ENCODE measurements at regions of chr14 and their contacts with region 1.

Region 1: DNA sequence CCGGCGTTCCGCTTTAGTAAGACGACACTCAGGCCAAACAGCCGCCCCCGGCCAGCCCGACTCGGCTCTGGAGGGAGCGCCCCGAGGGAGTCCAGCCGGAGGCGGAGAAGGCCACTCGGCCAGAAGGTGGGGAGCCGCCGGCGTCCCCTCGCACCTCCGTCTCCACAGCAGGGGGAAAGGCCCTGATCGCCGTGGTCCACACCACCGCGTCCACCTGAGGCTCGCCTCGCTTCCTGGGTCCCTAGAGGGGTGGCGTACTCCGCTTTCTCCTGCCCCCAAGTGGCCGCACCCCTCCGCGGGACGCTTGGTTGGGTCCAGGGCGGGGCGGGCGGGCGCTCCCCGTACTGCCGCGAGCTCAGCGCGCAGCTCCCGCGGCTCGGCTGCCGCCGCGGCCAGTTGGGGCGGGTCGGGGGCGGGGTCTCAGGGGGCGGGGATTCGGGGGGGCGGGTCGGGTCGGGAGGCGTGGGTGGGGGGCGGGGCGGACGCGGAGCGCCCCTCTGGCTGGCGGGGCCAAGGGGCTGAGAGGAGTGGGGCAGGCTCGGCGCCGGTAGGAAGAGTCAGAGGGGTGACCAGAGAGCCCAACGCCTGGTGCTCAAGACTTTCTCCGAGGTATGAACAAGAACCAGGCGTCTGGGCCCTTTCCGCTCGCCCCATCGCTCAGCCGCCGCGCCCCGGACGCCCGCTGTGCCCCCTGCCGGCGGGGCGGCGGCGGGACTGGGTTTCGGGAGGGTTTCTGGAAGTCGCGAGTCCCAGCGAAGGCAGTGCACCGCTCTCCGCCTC is at the start of gene FRMD6:
- DNase-seq: peak; percentile 89
- ATAC-seq: peak; percentile 80
- H3K4me3 Mint-ChIP-seq: peak within 1 kb of the TSS; percentile 93
- H3K27ac Mint-ChIP-seq: peak within 1 kb of the TSS; percentile 79
- H3K4me1 Mint-ChIP-seq: peaks cover 37% of the 10 kb centered on the region
- H3K27me3 Mint-ChIP-seq: no peaks in the 10 kb centered on the region
- CTCF ChIP-seq: peak; percentile 40; the same call in 1 of the 2 replicates
- total RNA-seq, gene FRMD6: 13.3 to 21.8 TPM (median 17.0 TPM) in 3 replicates

Region 2: DNA sequence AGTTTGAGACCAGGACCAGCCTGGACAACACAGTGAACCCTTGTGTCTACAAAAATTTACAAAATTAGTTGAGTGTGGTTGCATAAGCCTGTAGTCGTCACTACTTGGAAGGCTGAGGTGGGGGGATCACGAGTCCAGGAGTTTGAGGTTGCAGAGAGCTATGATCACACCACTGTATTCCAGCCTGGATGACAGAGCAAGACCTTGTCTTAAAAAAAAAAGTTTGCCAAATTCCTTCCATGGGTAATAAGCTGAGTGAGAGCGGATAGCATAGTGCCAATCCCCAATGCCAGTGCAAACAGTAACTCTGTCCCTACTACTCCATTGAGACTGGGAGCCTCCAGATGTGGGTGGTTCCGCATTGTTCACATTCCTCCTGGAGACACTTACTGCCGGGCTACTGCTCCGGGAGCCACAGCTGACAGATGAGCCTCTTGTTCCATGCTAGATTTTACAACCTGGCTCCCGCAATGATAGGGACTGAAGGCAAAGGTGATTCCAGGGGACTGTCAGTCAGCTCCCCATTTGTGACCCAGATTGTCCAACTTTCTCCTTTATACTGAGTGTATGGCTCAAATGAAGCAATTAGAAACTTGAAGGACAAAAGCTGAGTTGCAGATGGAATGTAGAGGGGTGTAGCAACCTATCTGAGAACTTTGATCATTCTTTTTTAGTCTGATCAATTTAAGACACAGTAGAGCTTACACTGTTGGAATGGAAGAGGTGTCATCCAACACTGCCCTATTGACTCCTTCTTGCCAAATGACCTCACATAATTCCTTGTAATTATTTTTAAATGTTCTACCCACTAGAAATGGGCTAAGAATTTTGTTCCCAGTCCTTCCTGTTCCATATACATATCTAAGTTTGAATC is 13.3 kb before region 1 on chr14:
- CTCF ChIA-PET with region 1: interaction called, 11 read pairs
- POLR2A ChIA-PET with region 1: no interaction called
- DNase-seq: peak; percentile 61
- ATAC-seq: peak; percentile 99
- H3K4me3 Mint-ChIP-seq: no peak overlapping the region
- H3K27ac Mint-ChIP-seq: no peak overlapping the region
- H3K4me1 Mint-ChIP-seq: peaks cover 15% of the 10 kb centered on the region
- H3K27me3 Mint-ChIP-seq: no peaks in the 10 kb centered on the region
- CTCF ChIP-seq: no peak

Region 3: GRCh38 chr14:52021957-52022600 is 370.5 kb after region 1 on chr14:
- CTCF ChIA-PET with region 1: no interaction called
- POLR2A ChIA-PET with region 1: no interaction called
- DNase-seq: no peak
- ATAC-seq: no peak
- H3K4me3 Mint-ChIP-seq: no peak overlapping the region
- H3K27ac Mint-ChIP-seq: peak overlapping the region; percentile 17; the same call in 1 of the 2 replicates
- H3K4me1 Mint-ChIP-seq: peaks cover 26% of the 10 kb centered on the region
- H3K27me3 Mint-ChIP-seq: no peaks in the 10 kb centered on the region; the same call in 1 of the 2 replicates
- CTCF ChIP-seq: no peak